Activated CD4-positive, alpha-beta T cell treated with anti-CD3 and anti-CD28 coated beads for 36 hours (primary cell): ENCODE measurements at regions of chr1 and their contacts with region 1.

Region 1: GRCh38 chr1:170531758-170532657 is at the start of gene GORAB:
- DNase-seq: peak; percentile 94
- ATAC-seq: peak; percentile 98
- H3K4me3 Mint-ChIP-seq: no peak within 1 kb of the TSS
- H3K27ac Mint-ChIP-seq: no peak within 1 kb of the TSS
- H3K4me1 Mint-ChIP-seq: peaks cover 15% of the 10 kb centered on the region
- H3K27me3 Mint-ChIP-seq: no peaks in the 10 kb centered on the region
- total RNA-seq, gene GORAB: 9.8 to 13.5 TPM

Region 2: DNA sequence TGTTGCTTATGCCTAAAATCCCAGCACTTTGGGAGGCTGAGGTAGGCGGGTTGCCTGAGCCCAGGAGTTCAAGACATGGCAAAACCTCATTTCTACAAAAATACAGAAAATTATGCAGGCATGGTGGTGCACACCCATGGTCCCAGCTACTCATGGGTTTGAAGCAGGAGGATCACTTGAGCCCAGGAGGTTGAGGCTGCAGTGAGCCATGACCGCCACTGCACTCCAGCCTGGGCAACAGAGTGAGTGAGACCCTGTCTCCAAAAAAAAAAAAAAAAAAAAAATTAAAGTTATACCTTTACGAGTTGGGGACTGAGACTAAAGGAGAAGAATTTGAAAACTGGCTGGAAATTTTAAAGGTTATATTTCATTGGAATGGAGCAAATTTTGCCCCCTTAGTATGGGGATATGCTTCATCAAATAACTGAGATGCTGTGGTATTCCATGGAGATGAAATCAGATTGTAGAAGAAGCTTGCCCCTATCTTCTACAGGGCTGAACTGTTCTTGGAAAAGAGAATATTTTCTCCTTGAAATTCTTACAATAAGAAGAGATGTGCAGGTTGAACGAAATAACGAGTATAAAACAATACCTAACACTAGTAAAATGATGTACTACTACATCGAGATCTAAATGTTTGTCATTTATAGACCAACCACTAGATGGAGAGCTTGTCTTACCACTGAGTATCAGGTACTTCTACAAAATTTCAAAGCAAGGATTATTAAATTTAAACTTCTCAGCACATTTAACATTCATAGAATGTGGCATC is 603.4 kb before region 1 on chr1:
- CTCF ChIA-PET with region 1: no interaction called
- POLR2A ChIA-PET with region 1: no interaction called
- intact Hi-C with region 1: loop called in 1 of 2 experiments (anchors 10 kb)
- DNase-seq: no peak
- ATAC-seq: peak; percentile 65
- H3K4me3 Mint-ChIP-seq: no peak overlapping the region
- H3K27ac Mint-ChIP-seq: no peak overlapping the region
- H3K4me1 Mint-ChIP-seq: peaks cover 4% of the 10 kb centered on the region
- H3K27me3 Mint-ChIP-seq: no peaks in the 10 kb centered on the region

Region 3: DNA sequence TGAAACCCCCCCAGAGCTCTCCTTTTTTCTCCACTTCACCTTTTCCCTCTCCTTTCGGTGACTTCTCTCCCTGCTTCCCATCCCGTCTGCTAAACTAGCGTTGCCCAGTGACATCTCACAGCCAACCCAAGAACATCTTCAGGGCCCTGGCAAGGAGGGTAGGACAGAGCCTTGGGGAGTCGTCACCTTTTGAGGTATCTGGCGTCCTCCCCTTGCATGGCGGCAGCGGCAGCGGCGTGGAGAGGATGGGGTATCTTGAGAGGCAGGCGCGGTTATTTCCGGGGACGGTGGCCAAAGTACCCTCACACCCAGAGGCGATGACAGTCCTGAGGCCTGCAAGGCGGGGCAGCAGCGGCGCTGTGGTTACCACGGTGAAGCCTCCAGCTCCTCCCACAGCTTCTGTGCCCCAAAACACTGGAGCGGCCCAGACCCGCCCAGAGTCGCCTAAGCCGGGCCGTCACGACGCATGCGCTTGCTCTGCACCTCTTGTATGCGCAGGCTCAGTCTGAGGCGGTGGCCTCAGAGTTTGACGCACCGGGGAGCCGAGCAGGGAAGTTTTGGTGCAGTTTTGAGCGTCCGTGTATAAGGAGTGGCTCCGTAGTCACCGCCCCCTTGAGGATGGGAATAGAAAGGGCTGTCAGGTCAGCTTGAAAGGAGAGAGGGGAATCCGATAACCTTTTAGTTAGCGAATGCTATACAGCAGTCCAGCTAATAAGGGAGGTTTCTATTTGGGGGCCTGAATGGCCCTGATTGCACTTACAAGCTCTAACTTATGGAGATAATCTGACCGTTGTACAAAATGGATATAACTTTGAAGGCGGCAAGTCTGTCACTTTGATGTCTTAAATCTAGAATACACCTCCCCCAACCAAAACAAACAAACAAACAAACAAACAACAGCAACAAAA is 457.5 kb before region 1 on chr1 and contains the start of gene KIFAP3:
- CTCF ChIA-PET with region 1: no interaction called
- POLR2A ChIA-PET with region 1: no interaction called
- intact Hi-C with region 1: loop called (anchors 1 to 10 kb)
- DNase-seq: peak; percentile 98
- ATAC-seq: peak; percentile 99
- H3K4me3 Mint-ChIP-seq: peak within 1 kb of the TSS; percentile 96
- H3K27ac Mint-ChIP-seq: peak within 1 kb of the TSS; percentile 87
- H3K4me1 Mint-ChIP-seq: peaks cover 43% of the 10 kb centered on the region
- H3K27me3 Mint-ChIP-seq: no peaks in the 10 kb centered on the region
- total RNA-seq, gene KIFAP3: 10.9 to 11.5 TPM

Region 4: DNA sequence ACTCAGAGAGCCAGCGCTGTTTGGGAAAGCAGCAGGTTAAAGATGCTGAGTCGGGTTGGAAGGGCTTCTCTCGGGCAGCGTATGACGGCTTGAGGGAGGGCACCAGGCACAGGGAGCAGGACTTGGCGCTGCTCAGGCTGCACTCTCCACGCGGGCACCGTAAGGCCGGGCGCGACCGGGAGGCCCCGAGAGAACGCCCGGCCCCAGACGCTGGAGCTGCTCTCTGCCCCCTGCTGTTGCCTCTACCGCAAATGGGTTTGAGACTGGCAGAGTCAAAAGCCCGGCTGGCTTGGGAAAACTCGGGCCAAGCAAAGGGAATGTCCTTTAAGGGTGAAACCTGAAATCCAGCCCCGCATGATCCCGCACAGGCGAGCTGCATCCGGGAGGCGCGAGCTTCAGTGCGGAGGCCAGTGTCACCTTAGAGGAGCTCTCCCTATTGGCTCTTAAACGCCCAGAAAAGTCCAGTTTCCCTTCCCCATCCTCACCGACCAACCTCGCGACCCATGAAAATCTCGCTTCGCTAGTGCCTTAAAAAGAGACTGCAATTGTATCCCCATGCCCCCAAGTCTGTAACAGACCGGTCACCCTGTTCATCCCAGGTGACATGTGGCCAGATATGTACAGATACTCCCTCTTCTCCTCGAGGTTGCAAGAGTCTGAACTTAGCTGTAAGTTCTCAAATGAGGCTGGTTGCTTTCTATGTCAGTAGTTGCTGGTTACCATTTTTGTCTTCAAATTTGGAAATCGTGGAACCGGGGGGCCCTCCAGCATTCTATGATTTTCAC is 133.0 kb after region 1 on chr1:
- CTCF ChIA-PET with region 1: no interaction called
- POLR2A ChIA-PET with region 1: no interaction called
- intact Hi-C with region 1: loop called (anchors 5 kb)
- DNase-seq: no peak
- ATAC-seq: no peak
- H3K4me3 Mint-ChIP-seq: peak overlapping the region; percentile 10
- H3K27ac Mint-ChIP-seq: no peak overlapping the region
- H3K4me1 Mint-ChIP-seq: peaks cover 34% of the 10 kb centered on the region
- H3K27me3 Mint-ChIP-seq: peaks cover 73% of the 10 kb centered on the region

Region 5: GRCh38 chr1:171781176-171781875 is 1249.3 kb after region 1 on chr1 and contains the start of gene METTL13:
- CTCF ChIA-PET with region 1: no interaction called
- POLR2A ChIA-PET with region 1: no interaction called
- intact Hi-C with region 1: loop called in 1 of 2 experiments (anchors 2 kb)
- DNase-seq: peak; percentile 99
- ATAC-seq: peak; percentile 97
- H3K4me3 Mint-ChIP-seq: peak within 1 kb of the TSS; percentile 92
- H3K27ac Mint-ChIP-seq: peak within 1 kb of the TSS; percentile 97
- H3K4me1 Mint-ChIP-seq: peaks cover 57% of the 10 kb centered on the region
- H3K27me3 Mint-ChIP-seq: no peaks in the 10 kb centered on the region
- total RNA-seq, gene METTL13: 41.1 to 52.9 TPM